ENCODE measurements at regions of chrX and their contacts with region 1.

Region 1: DNA sequence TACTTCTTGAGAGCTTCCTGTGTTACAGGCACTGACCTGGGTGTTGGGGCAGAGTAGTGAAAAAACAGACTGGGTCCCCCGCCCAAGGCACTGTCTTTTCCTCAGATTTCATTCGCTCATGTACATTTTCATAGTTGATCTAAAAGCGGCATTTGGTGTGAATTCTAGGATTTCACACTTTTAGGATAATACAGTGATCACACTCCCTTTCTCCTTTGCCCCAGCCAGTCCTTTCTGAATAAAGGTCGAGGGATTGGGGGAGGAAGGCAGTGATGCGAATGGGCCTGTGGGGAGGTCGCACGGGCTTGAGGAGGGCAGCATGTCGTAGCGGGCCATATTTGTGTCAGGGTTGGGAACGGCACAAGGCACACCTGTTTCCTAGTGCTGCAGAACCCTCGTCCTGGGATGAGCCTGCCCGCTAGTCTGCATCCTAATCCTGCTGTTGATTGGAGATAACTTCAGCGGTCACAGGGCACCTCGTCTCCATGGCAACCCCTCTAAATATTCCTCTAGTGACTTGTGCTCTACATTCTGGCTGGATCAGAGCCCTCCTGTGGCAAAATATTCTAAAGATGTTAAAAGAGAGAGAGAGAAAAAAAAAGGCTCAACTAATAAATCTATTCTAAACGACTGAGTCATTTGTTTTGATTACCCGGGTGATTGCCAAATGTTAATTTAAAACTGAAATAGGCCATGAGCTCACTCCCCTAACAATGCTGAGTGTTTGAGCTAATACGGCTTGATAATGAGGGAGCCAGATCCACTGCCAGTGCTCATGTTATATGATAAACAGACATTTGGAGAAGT is 21.8 kb downstream of the FHL1 start:
- DNase-seq: peak; percentile 63 to 76
- H3K4me3 ChIP-seq: peak overlapping the region in 1 of 2 donors; percentile 16
- H3K27ac ChIP-seq: peak overlapping the region; percentile 77 to 81
- H3K4me1 ChIP-seq: peaks cover 4 to 92% (median 21%) of the 10 kb centered on the region in 4 donors
- H3K27me3 ChIP-seq: no peaks in the 10 kb centered on the region
- CTCF ChIP-seq: no peak

Region 2: GRCh38 chrX:136045008-136045407 is 124.1 kb before region 1 on chrX:
- intact Hi-C with region 1: no loop called
- DNase-seq: no peak
- H3K4me3 ChIP-seq: no peak overlapping the region
- H3K27ac ChIP-seq: no peak overlapping the region
- H3K4me1 ChIP-seq: peaks cover 0 to 39% (median 6%) of the 10 kb centered on the region in 4 donors
- H3K27me3 ChIP-seq: no peaks in the 10 kb centered on the region
- CTCF ChIP-seq: no peak

Region 3: DNA sequence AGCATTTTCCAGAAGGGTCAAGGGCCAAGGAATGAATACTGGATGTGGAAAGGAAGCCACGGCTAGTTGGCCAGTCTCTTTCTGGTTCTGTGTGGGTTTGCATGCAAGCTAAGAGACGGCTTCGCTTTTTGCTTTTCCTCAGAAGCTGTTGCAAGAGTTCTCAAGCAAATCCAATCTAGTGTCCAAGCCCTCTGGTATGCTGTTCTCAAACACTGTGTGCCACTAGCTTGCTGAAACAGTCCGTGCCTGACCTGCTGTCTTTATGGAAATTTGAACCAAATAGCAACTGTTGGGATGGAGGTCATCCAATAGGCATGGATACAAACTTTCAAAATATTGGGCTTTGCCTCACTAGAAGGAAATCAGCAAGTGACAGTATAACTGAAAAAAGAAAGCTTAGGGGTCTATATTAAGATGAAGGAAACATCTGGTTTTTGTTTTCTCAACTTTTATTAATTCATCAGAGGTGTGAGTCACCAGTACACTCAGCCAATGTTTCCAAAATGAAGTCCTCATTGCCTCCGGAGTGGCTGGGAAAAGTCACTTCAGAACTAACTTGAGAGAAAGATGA is 113.4 kb before region 1 on chrX:
- intact Hi-C with region 1: no loop called
- DNase-seq: peak; percentile 68 to 81
- H3K4me3 ChIP-seq: no peak overlapping the region
- H3K27ac ChIP-seq: peak overlapping the region; percentile 90 to 91
- H3K4me1 ChIP-seq: peaks cover 0 to 52% (median 0%) of the 10 kb centered on the region in 4 donors
- H3K27me3 ChIP-seq: no peaks in the 10 kb centered on the region
- CTCF ChIP-seq: no peak

Region 4: GRCh38 chrX:136209016-136209738 is 40.0 kb after region 1 on chrX:
- intact Hi-C with region 1: loop called (anchors 5 kb)
- DNase-seq: peak; percentile 58 to 77
- H3K4me3 ChIP-seq: no peak overlapping the region
- H3K27ac ChIP-seq: peak overlapping the region; percentile 78 to 81
- H3K4me1 ChIP-seq: peaks cover 0 to 88% (median 33%) of the 10 kb centered on the region in 4 donors
- H3K27me3 ChIP-seq: no peaks in the 10 kb centered on the region
- CTCF ChIP-seq: peak; percentile 37 to 58

Region 5: DNA sequence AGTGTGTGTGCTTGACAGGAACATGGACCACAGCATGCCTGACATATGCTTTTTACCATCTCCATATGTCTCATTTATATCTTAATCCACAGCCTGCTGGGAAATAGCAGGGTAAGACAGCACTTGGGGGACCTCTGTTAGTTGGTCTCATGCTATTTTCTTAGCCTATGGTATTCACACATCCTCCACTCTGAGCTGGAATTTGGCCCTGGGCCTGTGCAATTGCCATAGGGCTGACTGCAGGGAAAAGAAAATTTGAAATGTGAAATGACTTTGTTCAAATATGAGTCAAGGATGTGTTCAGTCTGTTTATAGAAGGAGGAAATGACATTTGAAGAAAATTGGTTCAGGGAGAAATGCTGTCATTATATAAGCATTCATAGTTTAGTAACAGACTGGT is 91.6 kb after region 1 on chrX:
- intact Hi-C with region 1: loop called (anchors 5 kb)
- DNase-seq: no peak
- H3K4me3 ChIP-seq: no peak overlapping the region
- H3K27ac ChIP-seq: peak overlapping the region; percentile 81 to 83
- H3K4me1 ChIP-seq: peaks cover 0 to 74% (median 14%) of the 10 kb centered on the region in 4 donors
- H3K27me3 ChIP-seq: no peaks in the 10 kb centered on the region
- CTCF ChIP-seq: no peak

Region 6: GRCh38 chrX:136291824-136292223 is 122.7 kb after region 1 on chrX:
- intact Hi-C with region 1: no loop called
- DNase-seq: no peak
- H3K4me3 ChIP-seq: no peak overlapping the region
- H3K27ac ChIP-seq: no peak overlapping the region
- H3K4me1 ChIP-seq: no peaks in the 10 kb centered on the region
- H3K27me3 ChIP-seq: no peaks in the 10 kb centered on the region
- CTCF ChIP-seq: no peak